Heart left ventricle (tissue), 16 donors: ENCODE measurements at regions of chr5 and their contacts with region 1.

Region 1: DNA sequence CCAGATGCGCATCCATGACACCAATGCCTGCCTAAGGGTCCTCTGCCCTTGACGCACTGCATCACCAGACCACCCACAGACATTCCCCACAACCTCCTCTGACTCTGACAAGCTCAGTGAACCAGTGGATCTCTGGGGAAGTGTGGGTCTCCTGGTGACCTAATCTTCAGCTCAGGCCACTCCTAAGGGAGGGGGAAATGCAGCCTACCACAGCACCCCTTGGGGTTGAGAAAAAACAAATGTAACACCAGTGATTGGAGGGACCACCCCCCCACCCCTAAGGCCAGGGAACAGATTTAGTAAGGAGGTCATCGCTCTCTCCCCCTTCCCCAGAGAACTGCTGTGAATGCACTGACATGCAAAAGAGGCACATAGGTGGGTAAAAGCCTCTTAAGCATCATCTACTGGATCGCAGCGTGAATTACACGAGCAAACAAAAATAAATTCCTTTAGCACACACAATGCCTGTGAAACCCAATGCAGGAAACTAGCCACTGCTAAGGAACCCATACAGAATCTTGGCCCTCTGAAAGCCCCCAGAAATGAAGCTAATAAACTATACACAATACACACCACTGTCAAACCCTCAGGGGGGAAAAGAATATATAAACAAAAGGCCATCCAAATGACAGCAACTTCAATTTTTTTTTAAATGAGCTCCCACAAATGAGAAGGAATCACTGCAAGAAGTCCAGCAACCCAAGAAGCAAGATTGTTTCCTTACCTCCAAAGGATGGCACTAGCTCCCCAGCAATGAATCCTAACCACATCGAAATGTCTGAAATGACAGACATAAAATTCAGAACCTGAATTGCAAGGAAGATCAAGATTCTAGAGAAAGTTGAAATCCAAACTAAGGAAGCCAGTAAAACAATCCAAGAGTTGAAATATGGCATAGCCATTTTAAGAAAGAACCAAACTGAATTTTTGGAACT is 513.7 kb upstream of the PTGER4 start:
- DNase-seq: no peak
- ATAC-seq: no peak
- H3K4me3 ChIP-seq: no peak overlapping the region
- H3K27ac ChIP-seq: no peak overlapping the region
- H3K4me1 ChIP-seq: no peaks in the 10 kb centered on the region
- H3K27me3 ChIP-seq: no peaks in the 10 kb centered on the region
- CTCF ChIP-seq: peak in 8 of 12 donors; percentile 6 to 38 (median 30)
- POLR2A ChIP-seq: no peak

Region 2: DNA sequence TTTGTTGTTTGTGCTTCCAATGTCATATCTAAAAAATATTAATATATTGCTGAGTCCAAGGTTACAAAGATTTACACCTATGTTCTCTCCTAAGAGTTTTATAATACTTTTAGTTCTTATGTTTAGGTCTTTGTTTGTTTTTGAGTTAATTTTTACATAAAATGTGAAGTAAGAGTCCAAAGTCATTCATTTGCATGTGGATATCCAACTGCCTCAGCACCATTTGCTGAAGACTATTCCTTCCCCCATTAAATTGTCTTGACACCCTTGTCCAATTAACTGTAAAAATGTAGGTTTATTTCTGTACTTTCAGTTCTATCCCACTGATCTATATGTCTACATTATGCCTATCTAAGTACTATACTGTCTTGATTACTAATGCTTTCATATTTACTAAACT is 554.0 kb after region 1 on chr5:
- intact Hi-C with region 1: loop called in 1 of 10 experiments (anchors 10 kb)
- DNase-seq: no peak
- ATAC-seq: no peak
- H3K4me3 ChIP-seq: no peak overlapping the region
- H3K27ac ChIP-seq: no peak overlapping the region
- H3K4me1 ChIP-seq: peaks cover 0 to 8% (median 0%) of the 10 kb centered on the region in 12 donors
- H3K27me3 ChIP-seq: no peaks in the 10 kb centered on the region
- CTCF ChIP-seq: no peak
- POLR2A ChIP-seq: no peak